ENCODE measurements at regions of chr2 and their contacts with region 1.

Region 1: DNA sequence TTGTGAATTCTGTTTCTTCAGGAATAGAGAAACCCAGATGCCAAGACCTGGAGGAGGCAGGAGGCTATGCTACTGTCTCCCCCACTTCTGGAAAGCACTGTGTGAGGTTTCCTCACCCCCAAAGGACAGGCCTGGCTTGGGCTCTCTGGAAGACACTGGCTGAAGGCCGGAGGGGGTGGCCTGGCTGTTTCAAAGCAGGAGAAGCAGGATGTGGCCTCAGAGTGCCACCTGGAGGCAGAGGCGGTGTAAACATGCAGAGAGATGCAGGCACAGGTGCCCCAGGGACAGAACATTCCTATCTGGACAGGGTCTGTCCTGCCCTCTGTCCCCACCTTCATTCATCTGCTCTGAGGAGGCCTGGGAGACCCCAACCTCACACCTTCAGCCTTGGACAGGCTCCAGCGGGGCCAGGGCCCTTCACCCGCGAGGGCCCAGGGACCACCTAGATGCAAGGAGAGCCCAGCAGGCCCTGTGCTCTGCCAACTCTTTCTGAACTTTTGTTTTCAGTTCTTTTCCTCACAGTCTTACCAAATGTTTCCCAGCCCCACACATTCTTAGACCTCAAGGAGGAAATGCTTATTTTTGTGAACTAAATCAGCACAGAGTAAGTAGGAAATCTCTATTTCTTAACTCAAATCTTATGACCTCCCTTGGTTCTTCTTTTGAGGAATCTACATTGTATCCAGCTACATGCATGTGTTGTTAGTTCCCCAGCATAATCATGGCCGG is 79.2 kb downstream of the LONRF2 start:
- DNase-seq: peak; percentile 72
- ATAC-seq: peak; percentile 70
- H3K4me3 Mint-ChIP-seq: no peak overlapping the region
- H3K27ac Mint-ChIP-seq: no peak overlapping the region
- H3K4me1 Mint-ChIP-seq: no peaks in the 10 kb centered on the region
- H3K27me3 Mint-ChIP-seq: peaks cover 5% of the 10 kb centered on the region
- CTCF ChIP-seq: peak; percentile 69

Region 2: DNA sequence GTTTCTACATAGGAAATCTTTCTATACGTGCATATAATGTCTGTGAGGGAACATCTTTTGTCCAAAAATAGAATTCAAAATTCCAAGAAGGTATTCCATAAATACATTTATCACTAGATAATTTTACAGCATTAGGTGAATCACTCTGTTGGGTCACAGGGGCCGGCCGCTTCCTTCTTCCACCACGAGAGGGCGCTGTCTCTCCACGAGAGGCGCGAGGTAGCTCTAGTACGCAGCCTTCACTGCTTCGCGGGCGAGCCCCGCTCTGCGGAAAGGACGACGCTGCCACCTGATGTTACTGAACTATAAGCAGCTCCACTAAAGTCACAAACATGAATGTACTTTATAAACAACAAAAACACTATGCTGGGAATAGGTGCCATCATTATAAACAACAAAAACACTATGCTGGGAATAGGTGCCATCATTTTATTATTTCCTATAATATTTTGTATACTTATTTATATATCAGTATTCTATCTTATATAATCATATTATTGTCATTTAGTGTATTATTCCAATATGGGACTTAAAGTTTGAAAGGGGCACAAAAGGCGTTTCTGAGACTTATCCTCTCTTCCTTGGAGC is 683.9 kb before region 1 on chr2:
- CTCF ChIA-PET with region 1: interaction called, 8 read pairs
- POLR2A ChIA-PET with region 1: no interaction called
- intact Hi-C with region 1: loop called (anchors 2 kb)
- DNase-seq: peak; percentile 92
- ATAC-seq: peak; percentile 97
- H3K4me3 Mint-ChIP-seq: no peak overlapping the region
- H3K27ac Mint-ChIP-seq: no peak overlapping the region
- H3K4me1 Mint-ChIP-seq: peaks cover 2% of the 10 kb centered on the region
- H3K27me3 Mint-ChIP-seq: no peaks in the 10 kb centered on the region
- CTCF ChIP-seq: peak; percentile 99

Region 3: GRCh38 chr2:99818842-99819241 is 424.2 kb before region 1 on chr2:
- CTCF ChIA-PET with region 1: interaction called, 14 read pairs
- POLR2A ChIA-PET with region 1: no interaction called
- intact Hi-C with region 1: loop called (anchors 5 kb)
- DNase-seq: no peak
- ATAC-seq: no peak
- H3K4me3 Mint-ChIP-seq: no peak overlapping the region
- H3K27ac Mint-ChIP-seq: no peak overlapping the region
- H3K4me1 Mint-ChIP-seq: no peaks in the 10 kb centered on the region
- H3K27me3 Mint-ChIP-seq: no peaks in the 10 kb centered on the region
- CTCF ChIP-seq: no peak

Region 4: GRCh38 chr2:100126201-100126600 is 116.9 kb before region 1 on chr2:
- CTCF ChIA-PET with region 1: no interaction called
- POLR2A ChIA-PET with region 1: no interaction called
- intact Hi-C with region 1: no loop called
- DNase-seq: no peak
- ATAC-seq: no peak
- H3K4me3 Mint-ChIP-seq: no peak overlapping the region
- H3K27ac Mint-ChIP-seq: no peak overlapping the region
- H3K4me1 Mint-ChIP-seq: peaks cover 7% of the 10 kb centered on the region
- H3K27me3 Mint-ChIP-seq: no peaks in the 10 kb centered on the region
- CTCF ChIP-seq: no peak

Region 5: GRCh38 chr2:100146657-100146960 is 96.4 kb before region 1 on chr2:
- CTCF ChIA-PET with region 1: no interaction called
- POLR2A ChIA-PET with region 1: no interaction called
- intact Hi-C with region 1: no loop called
- DNase-seq: no peak
- ATAC-seq: no peak
- H3K4me3 Mint-ChIP-seq: no peak overlapping the region
- H3K27ac Mint-ChIP-seq: no peak overlapping the region
- H3K4me1 Mint-ChIP-seq: peaks cover 21% of the 10 kb centered on the region
- H3K27me3 Mint-ChIP-seq: peaks cover 2% of the 10 kb centered on the region
- CTCF ChIP-seq: no peak

Region 6: GRCh38 chr2:100174026-100174431 is 69.0 kb before region 1 on chr2:
- CTCF ChIA-PET with region 1: no interaction called
- POLR2A ChIA-PET with region 1: no interaction called
- intact Hi-C with region 1: no loop called
- DNase-seq: no peak
- ATAC-seq: no peak
- H3K4me3 Mint-ChIP-seq: no peak overlapping the region
- H3K27ac Mint-ChIP-seq: no peak overlapping the region
- H3K4me1 Mint-ChIP-seq: no peaks in the 10 kb centered on the region
- H3K27me3 Mint-ChIP-seq: no peaks in the 10 kb centered on the region
- CTCF ChIP-seq: no peak